ENCODE measurements at regions of chr9 and their contacts with region 1.

Region 1: GRCh38 chr9:131277910-131278701 is 1.8 kb upstream of the FAM78A start:
- DNase-seq: peak; percentile 87
- ATAC-seq: peak; percentile 50
- H3K4me3 Mint-ChIP-seq: peak overlapping the region; percentile 84
- H3K27ac Mint-ChIP-seq: peak overlapping the region; percentile 97
- H3K4me1 Mint-ChIP-seq: peaks cover 24% of the 10 kb centered on the region
- H3K27me3 Mint-ChIP-seq: peaks cover 16% of the 10 kb centered on the region

Region 2: DNA sequence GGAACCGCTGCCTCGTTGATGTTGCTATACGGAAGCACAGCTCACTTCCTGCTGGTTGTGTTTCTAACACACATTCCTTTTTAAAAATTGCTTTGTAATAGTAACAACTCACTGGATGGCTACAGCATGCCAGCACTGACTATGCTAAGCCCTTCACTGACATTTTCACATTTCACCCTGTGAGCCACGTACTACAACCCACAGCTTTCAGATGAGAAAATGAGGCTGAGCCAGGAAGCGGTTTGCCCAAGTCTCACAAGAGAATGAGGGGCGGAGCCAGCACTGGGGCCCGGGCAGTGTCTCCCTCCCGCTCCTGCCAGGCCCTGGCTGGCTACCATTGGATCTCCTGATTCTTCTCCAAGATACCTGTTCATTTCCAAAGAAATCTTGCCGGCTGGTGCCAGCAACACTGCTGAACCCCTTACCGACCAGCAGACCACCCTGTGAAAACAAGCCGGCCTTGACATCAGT is 40.1 kb before region 1 on chr9:
- CTCF ChIA-PET with region 1: no interaction called
- POLR2A ChIA-PET with region 1: interaction called, 11 read pairs
- DNase-seq: peak; percentile 94
- ATAC-seq: peak; percentile 98
- H3K4me3 Mint-ChIP-seq: peak overlapping the region; percentile 70
- H3K27ac Mint-ChIP-seq: peak overlapping the region; percentile 96
- H3K4me1 Mint-ChIP-seq: peaks cover 52% of the 10 kb centered on the region
- H3K27me3 Mint-ChIP-seq: no peaks in the 10 kb centered on the region

Region 3: DNA sequence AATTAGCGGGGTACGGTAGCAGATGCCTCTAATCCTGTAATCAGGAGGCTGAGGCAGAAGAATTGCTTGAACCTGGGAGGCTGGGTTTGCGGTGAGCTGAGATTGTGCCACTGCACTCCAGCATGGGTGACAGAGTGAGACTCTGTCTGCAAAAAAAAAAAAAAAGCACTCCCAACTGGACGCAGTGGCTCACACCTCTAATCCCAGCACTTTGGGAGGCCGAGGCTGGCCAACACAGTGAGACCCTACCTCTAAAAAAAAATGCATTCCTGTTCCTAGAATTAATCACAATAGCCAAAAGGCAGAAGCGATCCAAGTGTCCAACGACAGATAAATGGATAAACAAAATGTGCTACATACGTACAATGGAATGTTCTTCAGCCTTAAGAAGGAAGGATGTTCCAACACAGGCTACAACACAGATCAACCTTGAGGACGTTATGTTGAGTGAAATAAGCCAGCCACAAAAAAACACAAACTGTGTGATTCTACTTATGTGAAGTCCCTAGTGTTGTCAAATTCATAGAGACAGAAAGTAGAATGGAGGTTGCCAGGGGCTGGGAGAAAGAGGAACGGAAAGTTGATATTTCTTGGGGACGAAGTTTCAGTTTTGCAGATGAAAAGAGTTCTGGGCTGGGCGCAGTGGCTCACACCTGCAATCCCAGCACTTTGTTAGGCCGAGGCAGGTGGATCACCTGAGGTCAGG is 15.6 kb before region 1 on chr9:
- CTCF ChIA-PET with region 1: interaction called, 163 read pairs
- POLR2A ChIA-PET with region 1: interaction called, 330 read pairs
- DNase-seq: no peak
- ATAC-seq: no peak
- H3K4me3 Mint-ChIP-seq: peak overlapping the region; percentile 0
- H3K27ac Mint-ChIP-seq: peak overlapping the region; percentile 14
- H3K4me1 Mint-ChIP-seq: peaks cover 84% of the 10 kb centered on the region
- H3K27me3 Mint-ChIP-seq: no peaks in the 10 kb centered on the region

Region 4: DNA sequence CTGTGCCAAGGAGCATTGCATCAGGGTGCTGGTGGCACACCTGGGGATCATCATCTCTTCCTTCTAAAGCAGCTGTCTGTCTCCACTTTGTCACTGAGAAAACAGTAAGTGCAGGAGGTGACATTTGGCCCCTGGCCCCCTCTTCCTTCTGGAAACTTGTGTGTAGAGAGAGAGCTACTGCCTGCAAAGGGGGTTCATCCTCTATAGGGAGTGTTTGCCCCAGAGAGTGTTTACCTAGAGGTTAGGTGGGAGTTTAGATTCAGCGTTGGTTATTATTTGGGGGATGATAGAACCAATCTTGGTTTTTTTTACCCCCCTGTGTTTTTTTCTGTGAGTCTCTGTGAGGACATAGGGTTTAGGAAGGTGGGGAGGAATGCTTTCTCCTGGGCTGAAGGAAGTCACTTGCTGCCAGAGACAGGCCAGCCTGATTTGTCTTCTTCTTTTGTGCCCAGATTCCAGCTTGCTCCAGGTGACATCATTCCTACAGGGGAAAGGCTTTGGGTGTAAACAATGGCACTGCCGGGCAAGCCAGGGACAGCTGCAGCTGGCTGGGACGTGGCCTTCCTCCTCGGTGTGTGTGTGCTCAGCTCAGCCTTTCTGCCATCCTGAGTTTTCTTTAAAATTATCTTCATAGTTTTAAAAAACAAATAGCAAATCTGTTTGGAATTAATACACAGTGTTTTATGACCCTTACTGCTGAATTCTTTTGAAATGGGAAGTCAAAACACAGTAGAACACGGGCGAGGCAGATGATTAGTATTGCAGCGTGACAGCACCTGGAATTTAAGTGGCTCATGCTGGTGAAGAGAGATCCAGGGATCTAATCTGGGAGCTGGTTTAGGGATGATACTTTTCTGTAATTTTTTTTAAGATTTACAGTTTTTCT is 140.3 kb after region 1 on chr9:
- CTCF ChIA-PET with region 1: no interaction called
- POLR2A ChIA-PET with region 1: no interaction called
- DNase-seq: no peak
- ATAC-seq: no peak
- H3K4me3 Mint-ChIP-seq: peak overlapping the region; percentile 66
- H3K27ac Mint-ChIP-seq: peak overlapping the region; percentile 86
- H3K4me1 Mint-ChIP-seq: peaks cover 92% of the 10 kb centered on the region
- H3K27me3 Mint-ChIP-seq: no peaks in the 10 kb centered on the region

Measured in activated CD8-positive, alpha-beta T cell treated with anti-CD3 and anti-CD28 coated beads, Interleukin-2, amount 10 ng/mL, durations not matched to agents 7 days and 5 days (primary cell).